ENCODE measurements at regions of chr4 and their contacts with region 1.

Region 1: GRCh38 chr4:141133146-141133998 is at the start of gene RNF150:
- DNase-seq: peak; percentile 47 to 66 (median 59)
- ATAC-seq: peak; percentile 82
- H3K4me3 ChIP-seq: peak within 1 kb of the TSS; percentile 17
- H3K4me1 ChIP-seq: peaks cover 6% of the 10 kb centered on the region
- CTCF ChIP-seq: no peak
- total RNA-seq, gene RNF150: 2.5 to 88.8 (median 3.1) TPM

Region 2: GRCh38 chr4:140861359-140862176 is 271.8 kb before region 1 on chr4:
- intact Hi-C with region 1: loop called in 1 of 2 experiments (anchors 5 kb)
- DNase-seq: peak in 1 of 3 donors; percentile 89
- ATAC-seq: peak; percentile 60
- H3K4me3 ChIP-seq: no peak overlapping the region
- H3K4me1 ChIP-seq: no peaks in the 10 kb centered on the region
- CTCF ChIP-seq: peak; percentile 35

Measured in mucosa of descending colon (tissue), 3 donors.